ENCODE measurements at regions of chr5 and their contacts with region 1.

Region 1: GRCh38 chr5:157219491-157220271 is 39.0 kb downstream of the ITK start:
- DNase-seq: peak; percentile 80
- H3K4me3 Mint-ChIP-seq: peak overlapping the region; percentile 78
- H3K27ac Mint-ChIP-seq: peak overlapping the region; percentile 93
- H3K4me1 Mint-ChIP-seq: peaks cover 76% of the 10 kb centered on the region
- H3K27me3 Mint-ChIP-seq: no peaks in the 10 kb centered on the region

Region 2: DNA sequence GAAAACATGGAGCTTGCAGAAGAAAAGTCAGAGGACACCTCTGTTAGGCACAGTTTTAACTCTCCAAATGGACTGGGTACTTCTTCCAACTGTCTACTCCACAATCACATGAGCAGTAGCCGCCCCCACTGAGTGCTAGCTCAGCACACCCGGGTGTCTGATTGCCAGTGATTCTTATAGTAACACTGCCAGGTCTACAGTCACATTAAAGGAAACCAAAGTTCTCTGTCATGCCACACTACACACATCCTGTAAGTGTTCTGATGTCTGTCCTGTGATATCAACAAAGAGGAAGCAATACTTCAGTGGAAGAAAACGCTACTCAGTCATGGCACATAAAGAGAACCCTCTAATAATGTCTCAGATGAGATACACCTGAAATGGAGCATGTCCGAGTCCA is 110.7 kb before region 1 on chr5 and contains the start of gene HAVCR2:
- intact Hi-C with region 1: loop called (anchors 2 kb)
- DNase-seq: peak; percentile 90
- H3K4me3 Mint-ChIP-seq: peak within 1 kb of the TSS; percentile 97
- H3K27ac Mint-ChIP-seq: peak within 1 kb of the TSS; percentile 98
- H3K4me1 Mint-ChIP-seq: peaks cover 58% of the 10 kb centered on the region
- H3K27me3 Mint-ChIP-seq: no peaks in the 10 kb centered on the region
- total RNA-seq, gene HAVCR2: 70.0 and 73.1 TPM in 2 replicates

Region 3: GRCh38 chr5:157148734-157149615 is 70.7 kb before region 1 on chr5:
- intact Hi-C with region 1: loop called (anchors 1 kb)
- DNase-seq: peak; percentile 95
- H3K4me3 Mint-ChIP-seq: peak overlapping the region; percentile 37
- H3K27ac Mint-ChIP-seq: peak overlapping the region; percentile 83
- H3K4me1 Mint-ChIP-seq: peaks cover 46% of the 10 kb centered on the region
- H3K27me3 Mint-ChIP-seq: no peaks in the 10 kb centered on the region

Region 4: GRCh38 chr5:157172403-157172802 is 47.3 kb before region 1 on chr5:
- intact Hi-C with region 1: loop called (anchors 1 kb)
- DNase-seq: peak; percentile 95
- H3K4me3 Mint-ChIP-seq: peak overlapping the region; percentile 81
- H3K27ac Mint-ChIP-seq: peak overlapping the region; percentile 96
- H3K4me1 Mint-ChIP-seq: peaks cover 76% of the 10 kb centered on the region
- H3K27me3 Mint-ChIP-seq: no peaks in the 10 kb centered on the region

Region 5: DNA sequence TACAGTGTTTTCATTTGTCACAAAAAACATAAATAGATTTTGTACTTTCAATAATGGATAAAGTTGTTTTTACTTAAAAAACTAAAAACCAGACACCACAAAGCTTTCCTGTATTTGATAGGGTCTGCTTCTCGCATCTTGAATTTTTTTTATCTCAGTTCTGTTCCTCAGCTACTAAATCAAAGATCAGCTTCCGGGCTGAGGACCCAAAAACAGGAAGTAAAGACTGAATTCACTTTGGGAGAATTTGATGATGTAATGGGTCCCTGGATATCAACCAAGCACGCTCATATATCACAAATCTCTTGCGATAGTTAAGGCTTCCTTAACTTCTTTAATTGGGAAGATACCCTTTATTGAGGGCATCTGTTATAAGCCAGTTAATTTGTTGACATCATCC is 14.9 kb before region 1 on chr5:
- intact Hi-C with region 1: loop called (anchors 1 kb)
- DNase-seq: no peak
- H3K4me3 Mint-ChIP-seq: peak overlapping the region; percentile 76
- H3K27ac Mint-ChIP-seq: peak overlapping the region; percentile 86
- H3K4me1 Mint-ChIP-seq: peaks cover 76% of the 10 kb centered on the region
- H3K27me3 Mint-ChIP-seq: no peaks in the 10 kb centered on the region

Region 6: GRCh38 chr5:157253547-157253946 is 33.9 kb after region 1 on chr5:
- intact Hi-C with region 1: loop called (anchors 1 kb)
- DNase-seq: no peak
- H3K4me3 Mint-ChIP-seq: peak overlapping the region; percentile 61
- H3K27ac Mint-ChIP-seq: peak overlapping the region; percentile 93
- H3K4me1 Mint-ChIP-seq: peaks cover 82% of the 10 kb centered on the region
- H3K27me3 Mint-ChIP-seq: no peaks in the 10 kb centered on the region

Region 7: GRCh38 chr5:157603333-157604190 is 383.9 kb after region 1 on chr5:
- intact Hi-C with region 1: loop called (anchors 10 kb)
- DNase-seq: peak; percentile 92
- H3K4me3 Mint-ChIP-seq: peak overlapping the region; percentile 65
- H3K27ac Mint-ChIP-seq: peak overlapping the region; percentile 88
- H3K4me1 Mint-ChIP-seq: peaks cover 73% of the 10 kb centered on the region
- H3K27me3 Mint-ChIP-seq: no peaks in the 10 kb centered on the region

Measured in activated CD4-positive, alpha-beta T cell treated with anti-CD3 and anti-CD28 coated beads, Interleukin-2, amount 10 ng/mL, durations not matched to agents 24 days and 14 days (primary cell).